ENCODE measurements at regions of chr1 and their contacts with region 1.

Region 1: GRCh38 chr1:147890177-147890790 is 12.3 kb upstream of the GJA8 start:
- DNase-seq: peak; percentile 24 to 86
- H3K4me3 ChIP-seq: no peak overlapping the region
- CTCF ChIP-seq: no peak
- POLR2A ChIP-seq: no peak

Region 2: GRCh38 chr1:147494998-147495580 is 395.2 kb before region 1 on chr1:
- intact Hi-C with region 1: loop called (anchors 10 kb)
- DNase-seq: peak; percentile 53 to 91
- H3K4me3 ChIP-seq: no peak overlapping the region
- CTCF ChIP-seq: peak in 1 of 3 donors; percentile 32
- POLR2A ChIP-seq: no peak

Region 3: DNA sequence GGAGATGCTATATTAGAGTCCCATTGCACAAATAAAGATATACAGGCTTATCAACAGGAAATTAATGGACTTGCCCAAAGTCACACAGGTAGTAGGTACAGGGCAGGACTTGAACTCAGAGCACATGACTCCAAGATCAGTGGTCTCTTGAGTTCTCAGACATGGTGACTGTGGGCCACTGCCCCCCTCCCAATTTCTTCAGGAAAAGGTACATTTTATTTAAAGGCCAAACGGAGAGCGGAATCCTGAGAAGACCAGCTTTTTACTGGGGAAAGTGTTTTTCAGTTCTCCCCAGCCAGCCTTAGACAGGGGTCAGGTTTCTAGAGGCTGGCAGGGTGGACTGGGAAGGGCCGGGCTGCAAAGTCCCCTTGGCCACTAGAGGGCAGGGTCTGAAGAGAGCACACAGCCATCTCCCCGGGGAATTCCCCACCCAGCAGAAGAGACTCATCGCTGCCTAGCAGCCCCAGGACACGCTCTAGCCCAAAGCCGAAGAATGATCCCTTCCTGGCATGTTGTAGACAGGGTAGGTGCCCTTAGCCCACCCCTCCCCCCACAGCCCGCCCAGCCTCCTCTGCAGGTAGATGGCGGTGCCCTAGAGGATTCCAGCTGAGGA is 249.6 kb before region 1 on chr1:
- intact Hi-C with region 1: loop called (anchors 10 kb)
- DNase-seq: peak in 1 of 2 donors; percentile 46
- H3K4me3 ChIP-seq: no peak overlapping the region
- CTCF ChIP-seq: peak in 1 of 3 donors; percentile 16
- POLR2A ChIP-seq: no peak

Region 4: DNA sequence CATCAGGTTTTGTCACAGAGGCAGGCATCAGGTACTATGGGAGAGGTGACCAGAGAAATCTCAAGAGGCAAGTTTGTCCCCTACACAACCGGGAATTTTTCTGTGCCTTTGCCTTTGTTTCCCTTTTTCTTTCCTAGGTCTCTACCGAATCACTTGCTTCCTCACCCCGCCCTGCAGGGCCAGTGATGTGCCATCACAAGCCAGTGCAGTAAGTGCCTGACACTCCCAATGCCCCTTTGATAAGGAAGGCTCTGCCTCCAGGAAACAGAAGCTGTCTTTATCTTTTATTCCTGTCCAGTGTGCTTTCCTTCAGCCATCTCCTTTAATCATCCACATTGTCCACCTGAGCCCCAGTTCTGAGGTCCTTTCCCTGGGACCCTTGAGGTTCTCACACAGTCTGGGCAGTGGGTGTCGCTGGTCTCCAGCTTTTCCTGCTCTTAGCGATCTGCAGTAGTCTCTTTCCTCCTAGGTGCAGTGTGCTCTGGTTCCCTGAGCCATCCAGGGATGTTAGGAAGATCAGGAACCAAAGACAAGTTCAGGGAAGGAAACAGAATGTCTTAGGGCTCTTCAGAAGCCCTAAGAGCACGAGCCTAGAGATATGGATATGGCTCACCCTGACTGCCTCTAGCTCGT is 166.5 kb before region 1 on chr1:
- intact Hi-C with region 1: loop called (anchors 10 kb)
- DNase-seq: no peak
- H3K4me3 ChIP-seq: no peak overlapping the region
- CTCF ChIP-seq: no peak
- POLR2A ChIP-seq: no peak

Region 5: GRCh38 chr1:147850759-147851508 is 39.4 kb before region 1 on chr1:
- intact Hi-C with region 1: no loop called
- DNase-seq: no peak
- H3K4me3 ChIP-seq: no peak overlapping the region
- CTCF ChIP-seq: no peak
- POLR2A ChIP-seq: no peak

Region 6: GRCh38 chr1:148259559-148259958 is 369.3 kb after region 1 on chr1:
- intact Hi-C with region 1: no loop called
- DNase-seq: no peak
- H3K4me3 ChIP-seq: no peak overlapping the region
- CTCF ChIP-seq: no peak
- POLR2A ChIP-seq: no peak